Gastrocnemius medialis (tissue), 4 donors: ENCODE measurements at regions of chr6 and their contacts with region 1.

Region 1: DNA sequence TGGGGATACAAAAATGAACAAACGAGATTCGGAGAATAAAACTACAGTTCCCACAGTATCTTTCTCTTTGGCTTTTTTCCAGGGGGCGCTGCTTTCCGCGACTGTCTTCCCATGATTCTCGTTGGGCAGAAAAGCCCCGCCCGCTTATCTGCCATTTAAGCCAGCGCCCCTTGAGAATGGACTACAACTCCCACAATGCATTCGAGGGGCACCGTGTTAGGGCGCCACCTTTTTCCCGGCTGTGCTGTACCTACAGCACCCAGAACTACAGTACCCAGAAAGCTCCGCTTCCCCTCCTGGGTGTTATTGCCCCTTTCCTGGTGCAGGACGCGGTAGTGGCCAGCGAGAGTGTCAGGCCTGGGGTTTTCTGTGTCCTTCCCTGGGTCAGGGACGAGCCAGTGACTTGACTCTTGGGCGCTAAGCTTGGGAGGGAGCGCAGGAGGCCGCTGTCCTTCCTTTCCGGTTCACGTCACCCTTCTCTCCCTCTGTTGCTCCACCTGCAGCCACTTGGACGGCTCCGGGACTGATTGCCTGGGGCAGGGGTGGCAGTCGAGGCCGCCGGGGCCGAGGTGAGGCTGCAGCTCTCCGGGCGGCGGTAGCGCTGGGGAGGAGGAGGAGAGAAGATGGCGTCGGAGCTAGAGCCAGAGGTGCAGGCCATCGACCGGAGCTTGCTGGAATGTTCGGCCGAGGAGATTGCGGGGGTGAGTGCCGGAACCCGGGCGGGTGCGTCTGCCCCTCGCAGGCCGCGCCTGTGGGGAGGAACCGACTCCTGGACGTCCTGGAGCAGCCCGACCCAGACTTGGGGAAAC is at the start of gene UBR2:
- DNase-seq: peak; percentile 98 to 99
- ATAC-seq: peak; percentile 96 to 97
- H3K4me3 ChIP-seq: peak within 1 kb of the TSS; percentile 73 to 98 (median 81)
- H3K27ac ChIP-seq: peak within 1 kb of the TSS; percentile 91 to 97 (median 95)
- H3K4me1 ChIP-seq: peaks cover 22 to 26% of the 10 kb centered on the region in 2 donors
- H3K27me3 ChIP-seq: no peaks in the 10 kb centered on the region
- CTCF ChIP-seq: peak in 3 of 5 experiments; percentile 22 to 48 (median 31)
- POLR2A ChIP-seq: peak; percentile 94 to 96
- total RNA-seq, gene UBR2: 40.8 to 46.2 (median 44.7) TPM

Region 2: DNA sequence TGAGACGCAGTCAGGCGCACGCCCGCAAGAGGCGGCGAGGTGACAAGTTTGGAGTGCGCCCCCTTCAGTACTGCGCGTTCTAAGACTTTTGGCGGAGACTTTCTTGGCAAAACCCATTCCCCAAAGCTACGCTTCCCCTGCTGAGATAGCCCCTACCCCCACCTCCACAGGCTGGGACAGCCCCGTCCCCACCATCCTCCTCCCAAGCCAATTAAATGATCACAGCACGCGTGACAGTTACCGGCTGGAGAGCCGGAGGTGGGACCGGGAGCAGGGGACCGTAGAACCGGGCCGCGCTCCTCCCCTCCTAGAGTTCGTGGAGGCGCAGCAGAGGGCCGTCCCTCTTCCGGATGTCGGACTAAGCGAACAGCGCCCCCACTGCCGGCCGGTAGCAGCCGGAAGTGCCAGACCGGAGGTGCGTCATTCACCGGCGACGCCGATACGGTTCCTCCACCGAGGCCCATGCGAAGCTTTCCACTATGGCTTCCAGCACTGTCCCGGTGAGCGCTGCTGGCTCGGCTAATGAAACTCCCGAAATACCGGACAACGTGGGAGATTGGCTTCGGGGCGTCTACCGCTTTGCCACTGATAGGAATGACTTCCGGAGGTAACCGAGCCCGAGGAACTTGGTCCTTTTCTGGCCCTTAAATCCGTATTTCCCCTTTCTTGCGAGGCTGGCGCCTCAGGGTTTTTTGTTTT is 776.5 kb before region 1 on chr6 and contains the start of gene TOMM6:
- in situ Hi-C with region 1: no loop called
- intact Hi-C with region 1: loop called (anchors 1 kb)
- DNase-seq: peak; percentile 92 to 93
- ATAC-seq: peak; percentile 91 to 92
- H3K4me3 ChIP-seq: peak within 1 kb of the TSS; percentile 77 to 97 (median 88)
- H3K27ac ChIP-seq: peak within 1 kb of the TSS; percentile 92 to 96 (median 94)
- H3K4me1 ChIP-seq: peaks cover 21 to 24% of the 10 kb centered on the region in 2 donors
- H3K27me3 ChIP-seq: no peaks in the 10 kb centered on the region
- CTCF ChIP-seq: peak; percentile 94 to 97 (median 95)
- POLR2A ChIP-seq: peak; percentile 76 to 77
- total RNA-seq, gene TOMM6: 152 to 186 (median 166) TPM

Region 3: DNA sequence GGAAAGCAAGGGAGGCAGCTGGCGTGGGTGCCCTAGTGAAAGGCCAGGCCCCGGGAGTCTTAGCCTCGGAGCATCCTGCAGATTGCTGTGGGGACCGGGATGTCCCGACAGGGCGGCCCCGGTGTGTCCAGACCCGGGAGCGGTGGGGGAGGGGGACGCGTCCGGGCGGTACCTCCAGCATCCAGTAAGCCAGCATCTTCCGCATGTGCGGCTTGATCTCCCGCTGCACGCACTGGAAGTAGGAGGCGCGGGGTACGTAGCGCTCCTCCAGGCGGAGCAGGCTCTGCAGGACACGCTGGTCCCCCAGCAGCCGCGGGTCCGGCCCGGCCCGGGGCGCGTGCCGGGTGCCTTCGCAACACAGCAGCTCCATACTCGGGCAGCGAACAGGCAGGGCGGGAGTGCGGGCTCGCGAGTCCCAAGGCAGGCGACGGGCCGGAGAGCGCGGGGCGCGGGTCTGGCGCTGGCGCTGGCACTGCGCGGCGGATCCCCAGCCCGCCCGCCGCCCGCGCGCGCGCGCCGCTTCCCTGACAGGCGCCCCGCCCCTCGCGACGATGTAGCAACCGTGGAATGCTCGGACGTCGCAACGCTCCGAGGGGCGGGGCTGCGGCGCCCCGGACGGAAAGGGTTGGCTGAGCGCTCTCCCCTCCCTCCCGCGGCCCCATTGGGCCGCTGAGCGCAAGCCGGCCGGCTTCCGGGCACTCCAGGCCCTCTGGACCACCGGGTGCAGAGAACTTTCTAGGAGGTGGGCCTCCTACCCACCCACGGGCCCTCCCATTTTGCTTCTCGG is 622.4 kb before region 1 on chr6 and contains the start of gene CCND3:
- in situ Hi-C with region 1: loop called in 1 of 4 experiments (anchors 25 kb)
- intact Hi-C with region 1: no loop called
- DNase-seq: peak; percentile 78 to 84
- ATAC-seq: peak; percentile 92 to 94
- H3K4me3 ChIP-seq: peak within 1 kb of the TSS; percentile 66 to 97 (median 72)
- H3K27ac ChIP-seq: peak within 1 kb of the TSS; percentile 67 to 79 (median 74)
- H3K4me1 ChIP-seq: peaks cover 21 to 33% of the 10 kb centered on the region in 2 donors
- H3K27me3 ChIP-seq: no peaks in the 10 kb centered on the region
- CTCF ChIP-seq: peak in 1 of 5 experiments; percentile 16
- POLR2A ChIP-seq: peak; percentile 42 to 46
- total RNA-seq, gene CCND3: 28.9 to 48.7 (median 44.7) TPM

Region 4: DNA sequence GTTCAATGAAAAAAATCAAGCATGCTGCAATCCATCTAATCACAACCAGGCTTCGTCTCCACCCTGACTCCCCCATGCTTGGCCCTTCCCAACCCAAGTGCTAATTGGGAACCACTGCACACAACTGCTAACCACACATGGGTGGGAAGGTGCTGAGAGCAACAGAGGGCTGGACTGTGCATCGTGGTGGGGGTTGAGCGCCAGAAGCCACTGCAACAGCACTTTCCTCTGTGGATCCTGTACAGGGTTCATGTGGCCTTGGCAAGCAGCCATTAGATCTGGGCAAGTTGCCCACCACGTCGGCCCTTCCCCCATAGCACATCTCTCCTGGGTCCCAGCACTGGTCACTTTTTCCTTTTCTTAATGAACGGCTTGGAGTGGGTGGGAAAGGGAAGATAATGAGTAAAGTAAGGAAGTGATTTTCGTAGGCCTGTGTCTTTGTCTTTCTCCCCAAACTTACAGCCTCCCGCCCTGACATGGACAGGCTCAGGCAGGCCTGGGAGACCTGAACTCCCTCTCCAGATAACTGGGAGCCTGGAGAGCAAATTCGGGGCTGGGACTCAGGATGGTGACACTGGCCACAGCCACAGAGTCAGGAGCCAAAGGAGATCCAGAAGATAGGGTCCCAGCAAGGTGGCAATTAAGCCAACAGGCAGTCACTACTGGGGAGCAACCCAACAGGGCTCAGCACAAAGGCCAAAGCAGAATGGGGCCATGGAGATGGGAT is 311.8 kb before region 1 on chr6:
- in situ Hi-C with region 1: no loop called
- intact Hi-C with region 1: no loop called
- DNase-seq: peak in 1 of 2 donors; percentile 36
- ATAC-seq: peak; percentile 25 to 36
- H3K4me3 ChIP-seq: no peak overlapping the region
- H3K27ac ChIP-seq: peak overlapping the region; percentile 16 to 66 (median 36)
- H3K4me1 ChIP-seq: peaks cover 10 to 13% of the 10 kb centered on the region in 2 donors
- H3K27me3 ChIP-seq: no peaks in the 10 kb centered on the region
- CTCF ChIP-seq: no peak
- POLR2A ChIP-seq: no peak

Region 5: GRCh38 chr6:42547407-42548329 is 16.2 kb before region 1 on chr6:
- in situ Hi-C with region 1: no loop called
- intact Hi-C with region 1: loop called (anchors 1 kb)
- DNase-seq: peak; percentile 45 to 54
- ATAC-seq: peak; percentile 94
- H3K4me3 ChIP-seq: peak overlapping the region; percentile 51 to 60 (median 52)
- H3K27ac ChIP-seq: peak overlapping the region; percentile 4 to 58 (median 30)
- H3K4me1 ChIP-seq: peaks cover 0 to 6% of the 10 kb centered on the region in 2 donors
- H3K27me3 ChIP-seq: no peaks in the 10 kb centered on the region
- CTCF ChIP-seq: peak; percentile 78 to 97 (median 89)
- POLR2A ChIP-seq: no peak

Region 6: DNA sequence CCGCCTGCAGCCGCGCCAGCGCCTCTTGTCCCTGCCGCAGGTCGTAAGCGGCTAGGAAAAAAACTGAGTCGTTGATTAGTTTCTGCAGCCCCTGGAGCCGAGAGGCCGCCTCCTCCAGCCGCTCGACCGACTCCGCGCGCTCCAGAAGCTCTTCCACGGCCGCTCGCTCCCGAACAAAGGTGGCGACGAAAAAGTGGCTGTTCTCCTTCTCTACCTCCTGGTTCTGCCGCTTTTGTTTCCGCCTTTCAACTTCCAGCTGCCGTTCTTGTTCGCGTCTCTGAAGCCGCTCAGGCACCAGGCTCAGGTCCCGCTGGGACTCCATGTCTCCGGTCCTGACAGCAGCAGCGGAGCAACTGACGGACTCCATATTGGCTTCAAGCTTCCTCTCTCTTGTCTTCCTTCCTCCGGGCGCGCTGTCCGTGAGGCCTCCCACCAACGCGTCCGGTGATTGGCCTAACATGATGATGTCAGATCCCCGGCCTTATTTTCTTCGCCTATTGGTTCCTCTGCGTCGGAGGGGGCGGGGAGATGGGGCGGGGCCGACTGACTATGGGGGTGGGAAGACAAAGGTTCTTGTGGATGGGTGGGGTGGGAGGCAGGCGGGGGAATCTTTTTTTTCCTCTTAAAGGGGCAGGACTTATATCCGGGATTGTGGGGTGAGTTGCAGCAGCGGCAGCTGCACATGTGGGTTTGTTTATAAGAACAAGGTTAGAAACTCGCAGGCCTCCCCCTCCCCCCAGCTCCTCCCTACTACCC is 182.0 kb after region 1 on chr6 and contains the start of gene TBCC:
- in situ Hi-C with region 1: no loop called
- intact Hi-C with region 1: loop called (anchors 5 kb)
- DNase-seq: peak; percentile 99
- ATAC-seq: peak; percentile 84 to 86
- H3K4me3 ChIP-seq: peak within 1 kb of the TSS; percentile 80 to 99 (median 92)
- H3K27ac ChIP-seq: peak within 1 kb of the TSS; percentile 95 to 100 (median 97)
- H3K4me1 ChIP-seq: peaks cover 26 to 29% of the 10 kb centered on the region in 2 donors
- H3K27me3 ChIP-seq: no peaks in the 10 kb centered on the region
- CTCF ChIP-seq: no peak
- POLR2A ChIP-seq: peak; percentile 91 to 97
- total RNA-seq, gene TBCC: 33.2 to 61.8 (median 45.1) TPM

Region 7: DNA sequence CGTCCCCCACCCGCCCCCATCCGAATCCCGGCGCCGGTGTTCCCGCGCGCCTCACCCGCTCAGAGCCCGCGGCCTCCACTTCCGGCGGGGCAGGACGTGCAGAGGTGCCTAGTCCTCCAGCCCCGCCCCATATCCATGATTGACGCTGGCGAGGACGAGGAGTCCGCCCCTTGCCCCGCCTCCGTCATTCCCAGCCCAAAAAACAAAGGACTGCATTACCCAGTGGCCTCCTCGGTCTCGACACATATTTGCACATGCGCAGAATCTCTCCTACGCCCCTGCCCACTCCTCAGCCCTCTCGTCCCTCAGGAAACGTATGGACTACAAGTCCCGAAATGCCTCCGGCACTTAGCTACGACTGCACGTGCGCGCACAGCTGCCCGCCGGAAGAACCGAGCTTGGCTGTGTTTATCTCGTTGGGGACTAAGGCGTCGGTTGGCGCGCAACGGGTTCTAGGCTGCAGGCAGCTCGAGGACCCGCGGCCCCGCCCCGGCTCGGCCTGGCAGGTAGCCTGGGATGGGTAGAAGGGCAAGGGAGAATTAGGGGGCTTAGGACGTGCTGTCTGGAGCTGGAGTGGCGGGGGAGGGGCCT is 450.0 kb after region 1 on chr6 and contains the starts of genes KLHDC3 and MEA1:
- in situ Hi-C with region 1: loop called in 1 of 4 experiments (anchors 10 kb)
- intact Hi-C with region 1: loop called (anchors 2 kb)
- DNase-seq: peak; percentile 100
- ATAC-seq: peak; percentile 94 to 97
- H3K4me3 ChIP-seq: peak within 1 kb of the TSS; percentile 77 to 90 (median 82)
- H3K27ac ChIP-seq: peak within 1 kb of the TSS; percentile 95 to 98 (median 98)
- H3K4me1 ChIP-seq: peaks cover 54 to 59% of the 10 kb centered on the region in 2 donors
- H3K27me3 ChIP-seq: no peaks in the 10 kb centered on the region
- CTCF ChIP-seq: no peak
- POLR2A ChIP-seq: peak; percentile 66
- total RNA-seq, gene KLHDC3: 66.5 to 164 (median 119) TPM
- total RNA-seq, gene MEA1: 25.0 to 33.5 (median 25.9) TPM